Activated CD4-positive, alpha-beta memory T cell treated with anti-CD3 and anti-CD28 coated beads, Interleukin-2, amount 10 ng/mL, durations not matched to agents 7 days and 5 days (primary cell): ENCODE measurements at regions of chr6 and their contacts with region 1.

Region 1: GRCh38 chr6:10954590-10955010 is 67.7 kb downstream of the SYCP2L start:
- DNase-seq: peak; percentile 76
- H3K4me3 Mint-ChIP-seq: no peak overlapping the region
- H3K27ac Mint-ChIP-seq: no peak overlapping the region
- H3K4me1 Mint-ChIP-seq: peaks cover 2% of the 10 kb centered on the region
- H3K27me3 Mint-ChIP-seq: peaks cover 26% of the 10 kb centered on the region

Region 2: DNA sequence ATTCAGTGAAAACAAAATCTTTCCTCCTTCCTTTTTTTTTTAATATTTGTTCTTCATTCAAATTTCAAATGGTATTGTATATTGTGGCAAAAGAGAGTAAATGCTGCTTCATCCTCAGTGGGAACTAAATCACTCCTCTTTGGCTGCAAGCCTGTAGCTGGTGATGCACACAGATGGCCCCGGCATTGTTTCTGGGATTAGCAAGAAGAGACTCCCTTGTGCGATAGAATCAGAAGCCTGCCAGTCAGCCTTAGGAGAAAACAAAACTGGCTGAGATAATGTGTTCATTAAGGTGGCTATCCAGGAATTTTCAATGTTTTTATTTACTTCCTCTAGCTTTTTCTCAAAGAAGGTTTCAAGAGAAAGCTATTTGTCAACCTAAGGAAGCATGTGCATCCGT is 110.2 kb after region 1 on chr6:
- CTCF ChIA-PET with region 1: interaction called, 10 read pairs
- POLR2A ChIA-PET with region 1: no interaction called
- DNase-seq: no peak
- H3K4me3 Mint-ChIP-seq: no peak overlapping the region
- H3K27ac Mint-ChIP-seq: no peak overlapping the region
- H3K4me1 Mint-ChIP-seq: no peaks in the 10 kb centered on the region
- H3K27me3 Mint-ChIP-seq: peaks cover 4% of the 10 kb centered on the region

Region 3: DNA sequence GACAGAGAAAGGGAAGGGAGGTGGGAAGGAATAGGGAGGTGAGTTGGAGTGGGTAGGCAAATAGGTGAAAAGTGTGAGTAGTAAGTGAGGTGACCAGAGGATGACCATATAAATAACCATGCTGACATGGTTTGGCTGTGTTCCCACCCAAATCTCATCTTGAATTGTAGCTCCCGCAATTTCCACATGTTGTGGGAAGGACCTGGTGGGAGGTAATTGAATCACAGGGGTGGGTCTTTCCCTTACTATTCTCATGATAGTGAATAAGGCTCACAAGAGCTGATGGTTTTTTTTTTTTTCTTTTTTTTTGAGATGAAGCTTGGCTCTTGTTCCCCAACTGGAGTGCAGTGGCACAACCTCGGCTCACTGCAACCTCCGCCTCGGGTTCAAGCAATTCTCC is 117.5 kb after region 1 on chr6:
- CTCF ChIA-PET with region 1: interaction called, 10 read pairs
- POLR2A ChIA-PET with region 1: no interaction called
- DNase-seq: no peak
- H3K4me3 Mint-ChIP-seq: no peak overlapping the region
- H3K27ac Mint-ChIP-seq: no peak overlapping the region
- H3K4me1 Mint-ChIP-seq: no peaks in the 10 kb centered on the region
- H3K27me3 Mint-ChIP-seq: peaks cover 3% of the 10 kb centered on the region

Region 4: DNA sequence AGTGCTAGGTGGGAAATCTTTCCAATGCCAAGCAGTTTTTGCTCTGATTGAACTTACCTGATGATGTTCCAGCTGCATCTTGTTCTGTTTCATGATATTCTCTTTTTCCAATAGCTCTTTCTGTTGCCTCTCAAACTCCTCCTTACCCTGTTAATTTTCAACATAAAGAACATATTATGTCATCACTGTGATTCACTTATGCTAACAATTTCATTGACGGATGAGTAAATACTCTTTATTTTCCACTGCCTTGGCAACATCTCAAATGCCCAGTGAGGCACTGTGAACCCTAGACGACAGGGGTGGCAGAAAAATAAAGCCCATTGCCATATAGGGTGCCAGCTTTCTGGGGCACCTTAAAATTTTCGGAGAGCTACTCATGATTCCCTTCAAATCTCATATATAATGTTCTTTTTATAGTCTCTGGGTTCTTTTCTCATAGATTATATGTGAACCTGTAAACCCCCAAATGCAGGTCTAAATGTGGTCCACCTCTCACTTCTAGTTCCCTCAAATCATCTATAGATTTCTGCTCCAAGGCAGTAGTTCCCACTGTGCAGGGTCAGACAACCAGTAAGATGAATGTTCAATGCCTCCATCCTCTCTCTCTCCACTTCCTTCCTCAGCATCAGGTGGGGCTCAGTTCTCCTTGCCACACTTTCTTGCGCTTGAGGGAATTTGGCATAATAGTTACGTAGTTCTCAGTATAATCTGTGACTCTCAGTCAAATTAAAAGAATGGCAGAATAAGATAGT is 233.7 kb after region 1 on chr6:
- CTCF ChIA-PET with region 1: no interaction called
- POLR2A ChIA-PET with region 1: no interaction called
- DNase-seq: no peak
- H3K4me3 Mint-ChIP-seq: no peak overlapping the region
- H3K27ac Mint-ChIP-seq: no peak overlapping the region
- H3K4me1 Mint-ChIP-seq: no peaks in the 10 kb centered on the region
- H3K27me3 Mint-ChIP-seq: no peaks in the 10 kb centered on the region